Gastrocnemius medialis (tissue), 4 donors: ENCODE measurements at regions of chr2 and their contacts with region 1.

Region 1: GRCh38 chr2:216698895-216699294 is 3.5 kb upstream of the IGFBP5 start:
- DNase-seq: no peak
- ATAC-seq: peak; percentile 62 to 66
- H3K4me3 ChIP-seq: no peak overlapping the region
- H3K27ac ChIP-seq: peak overlapping the region; percentile 69 to 75 (median 74)
- H3K4me1 ChIP-seq: peaks cover 66 to 68% of the 10 kb centered on the region in 2 donors
- H3K27me3 ChIP-seq: no peaks in the 10 kb centered on the region
- CTCF ChIP-seq: peak; percentile 63 to 81 (median 67)
- POLR2A ChIP-seq: no peak

Region 2: DNA sequence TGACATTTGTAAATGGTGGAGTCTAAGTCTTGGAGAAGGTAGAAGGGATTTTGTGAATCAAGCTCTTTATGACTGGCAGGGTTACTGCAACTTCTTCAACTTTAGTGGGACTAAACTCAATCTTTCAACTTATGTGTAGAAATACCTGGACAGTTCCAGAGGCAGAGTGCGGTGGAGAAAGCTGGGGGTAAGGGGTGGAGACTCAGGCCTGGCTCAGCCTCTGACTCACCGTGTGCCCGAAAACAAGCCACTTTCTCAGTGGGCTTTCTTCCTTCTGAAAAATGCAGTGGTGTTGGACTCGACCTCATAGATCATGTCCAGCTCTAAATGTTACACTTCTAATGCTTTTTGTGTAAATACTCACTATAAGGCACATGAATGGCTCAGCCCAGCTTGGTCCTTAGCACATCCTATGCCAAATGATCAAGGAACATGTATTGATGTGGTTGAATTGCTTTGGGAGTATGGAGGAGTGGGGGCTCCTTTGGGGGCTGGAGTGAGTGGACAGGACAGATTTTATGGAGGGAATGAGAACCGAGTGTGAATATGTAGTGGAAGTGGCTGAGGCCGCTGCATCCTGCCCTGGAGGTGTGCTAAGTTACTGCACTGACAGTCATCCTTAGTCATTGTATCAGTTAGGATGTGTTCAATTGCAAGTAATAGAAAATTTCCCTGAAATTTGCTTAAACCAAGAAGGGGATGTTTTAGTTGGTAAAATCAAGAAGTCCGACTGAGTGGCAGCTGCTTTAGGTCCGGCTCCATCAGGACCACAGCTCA is 28.6 kb after region 1 on chr2:
- in situ Hi-C with region 1: no loop called
- intact Hi-C with region 1: no loop called
- DNase-seq: no peak
- ATAC-seq: peak in 1 of 2 donors; percentile 23
- H3K4me3 ChIP-seq: no peak overlapping the region
- H3K27ac ChIP-seq: no peak overlapping the region
- H3K4me1 ChIP-seq: no peaks in the 10 kb centered on the region
- H3K27me3 ChIP-seq: no peaks in the 10 kb centered on the region
- CTCF ChIP-seq: no peak
- POLR2A ChIP-seq: no peak

Region 3: GRCh38 chr2:216775043-216775453 is 76.2 kb after region 1 on chr2:
- in situ Hi-C with region 1: no loop called
- intact Hi-C with region 1: loop called (anchors 2 kb)
- DNase-seq: peak; percentile 93 to 97
- ATAC-seq: peak; percentile 88 to 93
- H3K4me3 ChIP-seq: no peak overlapping the region
- H3K27ac ChIP-seq: peak overlapping the region; percentile 94 to 98 (median 96)
- H3K4me1 ChIP-seq: peaks cover 35 to 37% of the 10 kb centered on the region in 2 donors
- H3K27me3 ChIP-seq: no peaks in the 10 kb centered on the region
- CTCF ChIP-seq: peak in 2 of 5 experiments; percentile 21 to 23
- POLR2A ChIP-seq: peak in 1 of 2 donors; percentile 10

Region 4: DNA sequence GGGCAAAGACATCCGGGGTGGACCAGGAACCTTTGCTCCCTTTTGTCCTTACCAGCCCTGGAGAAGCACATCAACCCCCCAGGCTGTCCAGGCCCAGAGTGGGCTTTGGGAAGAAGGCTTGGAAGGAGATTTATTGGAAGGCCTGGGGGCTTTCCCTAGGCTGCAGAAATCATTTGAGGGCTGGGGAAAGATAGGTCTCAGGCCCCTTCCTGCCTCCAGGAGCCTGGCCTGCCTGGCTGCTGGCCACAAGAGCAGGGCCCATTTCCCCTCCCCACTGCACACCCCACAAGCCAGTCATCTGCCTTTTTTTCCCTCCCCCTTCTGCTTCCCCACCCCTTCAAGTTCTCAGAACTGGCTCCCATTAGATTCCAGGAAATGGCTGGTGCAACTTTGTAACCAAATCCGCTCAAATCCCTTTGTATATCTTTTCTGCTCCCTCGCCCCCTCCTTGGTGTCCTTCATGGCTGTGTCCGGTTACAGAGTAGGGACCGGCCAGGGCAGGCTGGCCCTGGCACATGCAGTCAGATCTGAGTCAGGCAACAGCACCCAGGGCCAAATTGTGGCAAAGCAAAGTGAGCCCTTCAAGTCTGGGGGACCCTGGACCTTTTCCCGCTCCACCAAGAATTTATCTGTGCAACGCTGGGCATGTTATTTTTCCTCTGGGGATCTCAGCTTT is 181.8 kb after region 1 on chr2:
- in situ Hi-C with region 1: loop called in 2 of 4 experiments (anchors 25 kb)
- intact Hi-C with region 1: no loop called
- DNase-seq: peak; percentile 79 to 89
- ATAC-seq: peak; percentile 64 to 72
- H3K4me3 ChIP-seq: no peak overlapping the region
- H3K27ac ChIP-seq: peak overlapping the region; percentile 88 to 95 (median 90)
- H3K4me1 ChIP-seq: peaks cover 77 to 84% of the 10 kb centered on the region in 2 donors
- H3K27me3 ChIP-seq: no peaks in the 10 kb centered on the region
- CTCF ChIP-seq: no peak
- POLR2A ChIP-seq: no peak

Region 5: DNA sequence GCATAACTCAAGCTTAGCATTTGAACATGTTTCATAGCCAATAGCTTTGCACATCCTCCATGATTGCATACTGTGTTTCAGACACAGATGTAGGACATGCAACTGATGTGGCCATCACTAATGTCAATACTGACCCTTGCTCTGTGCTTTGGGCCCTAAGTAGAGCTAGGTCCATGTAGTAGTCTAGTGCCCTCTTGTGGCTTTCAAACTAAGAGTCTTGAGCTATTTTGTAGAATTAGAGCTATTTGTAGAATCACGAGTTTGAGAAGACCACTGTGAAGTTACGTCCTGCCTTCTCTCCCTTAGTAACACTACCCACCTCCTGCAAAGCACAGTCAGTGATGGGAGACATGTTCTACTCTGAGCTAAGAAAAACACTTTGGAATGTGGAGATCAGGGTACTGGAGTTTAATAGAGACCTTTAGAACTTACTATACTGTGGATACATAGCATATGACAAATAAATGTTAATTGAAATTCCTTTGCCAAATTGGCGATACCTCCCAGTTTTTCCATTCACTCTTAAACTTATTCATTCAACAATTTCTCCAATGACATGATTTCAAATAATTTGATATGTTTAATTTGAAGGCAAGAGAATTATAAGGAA is 467.5 kb after region 1 on chr2:
- in situ Hi-C with region 1: loop called (anchors 5 to 25 kb)
- intact Hi-C with region 1: loop called (anchors 1 kb)
- DNase-seq: no peak
- ATAC-seq: peak in 1 of 2 donors; percentile 71
- H3K4me3 ChIP-seq: no peak overlapping the region
- H3K27ac ChIP-seq: no peak overlapping the region
- H3K4me1 ChIP-seq: peaks cover 16 to 32% of the 10 kb centered on the region in 2 donors
- H3K27me3 ChIP-seq: no peaks in the 10 kb centered on the region
- CTCF ChIP-seq: peak; percentile 63 to 71 (median 64)
- POLR2A ChIP-seq: no peak

Region 6: GRCh38 chr2:217505303-217505702 is 806.4 kb after region 1 on chr2:
- in situ Hi-C with region 1: loop called in 1 of 4 experiments (anchors 5 kb)
- intact Hi-C with region 1: loop called (anchors 2 kb)
- DNase-seq: no peak
- ATAC-seq: no peak
- H3K4me3 ChIP-seq: no peak overlapping the region
- H3K27ac ChIP-seq: no peak overlapping the region
- H3K4me1 ChIP-seq: no peaks in the 10 kb centered on the region
- H3K27me3 ChIP-seq: no peaks in the 10 kb centered on the region
- CTCF ChIP-seq: no peak
- POLR2A ChIP-seq: no peak

Region 7: DNA sequence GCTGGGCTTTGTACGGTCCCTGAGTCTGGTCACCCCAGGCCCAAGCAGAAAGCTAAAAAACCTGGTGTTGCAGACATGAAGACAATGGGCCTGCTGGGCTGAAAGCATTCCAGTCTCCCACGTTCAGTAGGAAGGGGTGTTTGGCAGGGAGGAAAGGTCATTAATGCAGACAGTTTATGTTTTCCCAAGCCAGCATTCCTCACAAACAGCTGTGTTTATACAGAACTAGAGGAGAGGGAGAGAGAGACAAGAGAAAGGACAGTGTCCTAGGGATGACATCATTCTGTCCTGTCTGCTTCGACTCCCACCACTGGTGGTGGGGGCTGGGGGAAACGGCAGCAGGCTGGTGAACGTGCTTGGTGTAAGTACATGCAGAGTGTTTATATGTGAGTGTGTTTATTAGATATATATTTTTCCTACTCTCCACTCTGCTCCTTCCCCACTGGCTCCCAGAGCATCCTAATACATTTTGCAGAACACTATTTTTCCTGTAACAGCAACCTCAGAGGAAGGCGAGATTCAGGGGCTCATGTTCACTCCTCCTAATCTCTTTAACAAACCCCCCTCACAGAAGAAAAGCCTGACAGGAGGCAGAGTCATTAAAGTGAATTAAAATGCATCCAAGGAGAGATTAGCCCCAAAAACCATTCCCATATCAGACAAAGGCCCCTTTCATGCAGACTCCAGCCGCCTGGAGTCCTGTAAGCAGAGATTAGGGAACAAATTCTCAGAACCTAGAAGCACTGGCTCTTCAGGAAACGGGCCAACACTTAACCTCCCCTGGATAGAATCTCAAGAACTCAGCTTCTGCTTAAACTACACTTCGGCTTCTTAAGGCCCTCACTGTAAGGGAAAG is 923.5 kb after region 1 on chr2:
- in situ Hi-C with region 1: loop called in 1 of 4 experiments (anchors 25 kb)
- intact Hi-C with region 1: no loop called
- DNase-seq: no peak
- ATAC-seq: peak in 1 of 2 donors; percentile 51
- H3K4me3 ChIP-seq: no peak overlapping the region
- H3K27ac ChIP-seq: peak overlapping the region in 2 of 4 donors; percentile 12 to 19
- H3K4me1 ChIP-seq: peaks cover 10 to 14% of the 10 kb centered on the region in 2 donors
- H3K27me3 ChIP-seq: no peaks in the 10 kb centered on the region
- CTCF ChIP-seq: no peak
- POLR2A ChIP-seq: no peak

Region 8: GRCh38 chr2:217713395-217714286 is 1014.7 kb after region 1 on chr2:
- in situ Hi-C with region 1: loop called in 3 of 4 experiments (anchors 10 to 25 kb)
- intact Hi-C with region 1: loop called (anchors 5 kb)
- DNase-seq: peak; percentile 38 to 64
- ATAC-seq: peak; percentile 76 to 77
- H3K4me3 ChIP-seq: no peak overlapping the region
- H3K27ac ChIP-seq: peak overlapping the region; percentile 30 to 67 (median 41)
- H3K4me1 ChIP-seq: peaks cover 10 to 18% of the 10 kb centered on the region in 2 donors
- H3K27me3 ChIP-seq: no peaks in the 10 kb centered on the region
- CTCF ChIP-seq: peak; percentile 86 to 99 (median 93)
- POLR2A ChIP-seq: no peak